WTC11 (cell line): ENCODE measurements at regions of chr12 and their contacts with region 1.

Region 1: GRCh38 chr12:45990468-45991283 is at the start of gene SCAF11:
- DNase-seq: peak; percentile 100
- ATAC-seq: peak; percentile 82
- H3K4me3 Mint-ChIP-seq: peak within 1 kb of the TSS; percentile 89
- H3K27ac Mint-ChIP-seq: peak within 1 kb of the TSS; percentile 97
- H3K4me1 Mint-ChIP-seq: peaks cover 32% of the 10 kb centered on the region
- H3K27me3 Mint-ChIP-seq: peaks cover 7% of the 10 kb centered on the region
- CTCF ChIP-seq: peak; percentile 94
- total RNA-seq, gene SCAF11: 65.6 to 82.4 TPM (median 72.6 TPM) in 3 replicates

Region 2: DNA sequence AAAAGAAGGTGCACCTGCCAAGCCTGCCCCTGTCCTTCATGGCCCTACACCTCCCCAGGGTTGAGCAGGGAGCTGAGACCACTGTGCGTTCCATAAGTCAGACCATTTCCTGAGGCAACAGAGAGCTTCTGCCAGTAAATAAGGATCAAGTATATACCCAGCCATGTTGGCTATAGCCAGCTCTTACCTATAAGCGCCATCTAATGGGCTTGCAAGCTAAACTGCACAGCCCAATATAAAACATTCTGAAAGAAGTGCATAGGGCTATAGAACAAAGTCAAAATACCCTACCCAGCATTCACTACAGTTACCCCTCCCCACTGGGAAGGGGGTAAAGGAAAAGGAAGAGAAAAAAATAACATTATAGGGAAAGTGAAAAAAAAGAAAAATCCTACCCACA is 59.0 kb after region 1 on chr12:
- CTCF ChIA-PET with region 1: interaction called, 10 read pairs
- POLR2A ChIA-PET with region 1: interaction called, 3 read pairs
- DNase-seq: no peak
- ATAC-seq: peak; percentile 91
- H3K4me3 Mint-ChIP-seq: no peak overlapping the region
- H3K27ac Mint-ChIP-seq: no peak overlapping the region
- H3K4me1 Mint-ChIP-seq: peaks cover 5% of the 10 kb centered on the region
- H3K27me3 Mint-ChIP-seq: no peaks in the 10 kb centered on the region; the same call in 1 of the 2 replicates
- CTCF ChIP-seq: no peak